Activated CD4-positive, alpha-beta memory T cell treated with anti-CD3 and anti-CD28 coated beads for 36 hours (primary cell): ENCODE measurements at regions of chr6 and their contacts with region 1.

Region 1: DNA sequence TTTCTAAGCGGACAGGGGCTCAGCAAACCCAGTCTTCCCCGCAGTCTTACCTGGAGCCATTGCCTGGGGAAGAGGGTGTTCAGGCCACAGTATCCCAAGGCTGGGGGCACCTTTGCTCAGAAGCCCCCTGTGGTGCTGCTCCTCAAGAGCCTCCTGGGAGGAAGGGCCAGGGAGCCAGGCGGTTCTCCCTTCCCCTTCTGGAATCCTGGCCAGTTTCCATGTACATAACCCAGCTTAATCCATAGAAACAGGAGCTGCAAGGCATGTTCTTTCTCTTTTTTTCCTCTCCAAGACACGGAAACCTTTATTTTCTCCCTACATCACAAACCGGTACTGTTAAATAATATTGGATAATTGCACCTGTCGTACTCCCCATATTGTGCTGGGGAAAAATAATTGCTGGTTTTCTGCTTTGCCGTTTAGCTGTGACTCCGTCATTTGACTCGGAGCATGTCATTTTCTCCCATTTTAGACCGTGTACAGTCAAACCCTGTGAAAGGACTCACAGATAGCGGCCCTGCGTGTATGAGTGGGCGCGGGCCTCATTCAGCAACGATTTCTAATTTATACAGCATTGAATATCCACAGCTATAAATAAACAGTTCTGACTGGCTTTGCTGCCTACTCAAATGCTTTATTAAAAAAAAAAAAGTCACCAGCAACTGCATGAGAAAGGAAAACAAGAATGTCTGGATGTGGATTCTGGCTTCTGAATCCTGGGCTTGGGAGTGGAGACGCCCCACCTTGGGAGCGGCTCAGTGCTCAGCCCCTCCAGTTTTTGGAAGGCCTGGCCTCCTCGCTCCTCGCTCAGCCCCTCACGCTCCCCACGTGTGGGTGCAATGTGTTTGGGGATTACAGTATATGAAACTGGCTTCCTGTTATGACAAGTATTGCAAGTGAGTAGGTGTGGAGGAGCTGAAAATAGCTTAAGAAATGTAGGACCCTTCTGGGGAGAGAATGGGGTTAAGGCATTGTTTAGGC is 67.3 kb downstream of the ADTRP start:
- DNase-seq: peak; percentile 83
- H3K4me3 Mint-ChIP-seq: peak overlapping the region; percentile 68
- H3K27ac Mint-ChIP-seq: peak overlapping the region; percentile 97
- H3K4me1 Mint-ChIP-seq: peaks cover 72% of the 10 kb centered on the region
- H3K27me3 Mint-ChIP-seq: no peaks in the 10 kb centered on the region

Region 2: DNA sequence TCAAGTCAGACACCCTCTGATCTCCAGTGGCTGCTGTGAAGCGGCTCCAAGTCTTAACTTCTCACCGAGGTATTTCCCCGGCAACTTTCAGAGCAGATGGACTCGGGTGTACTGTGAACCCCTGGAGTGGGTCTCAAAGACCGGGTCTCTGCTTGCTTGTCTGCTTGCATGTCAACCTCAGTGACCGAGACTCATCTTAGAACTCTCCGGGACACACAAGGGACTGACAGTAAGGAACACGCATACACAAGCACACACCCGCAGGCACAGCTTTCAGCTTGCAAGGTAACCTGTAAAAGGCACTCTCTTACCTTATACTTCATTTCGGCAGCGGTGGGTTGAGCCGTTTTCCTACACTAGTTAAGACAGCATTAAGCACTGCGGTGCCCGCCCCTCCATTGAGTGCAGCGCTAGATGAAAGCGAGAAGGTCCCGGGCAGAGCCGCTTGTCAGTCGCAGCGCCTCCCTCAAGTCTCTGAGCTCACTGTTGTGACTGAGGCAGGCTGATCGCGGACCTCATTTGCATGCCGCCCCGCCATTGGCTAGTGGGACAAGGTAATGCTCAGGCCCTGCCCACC is 479.0 kb before region 1 on chr6 and contains the start of gene NEDD9:
- CTCF ChIA-PET with region 1: no interaction called
- POLR2A ChIA-PET with region 1: no interaction called
- intact Hi-C with region 1: loop called (anchors 10 kb)
- DNase-seq: peak; percentile 98
- H3K4me3 Mint-ChIP-seq: peak within 1 kb of the TSS; percentile 81
- H3K27ac Mint-ChIP-seq: peak within 1 kb of the TSS; percentile 96
- H3K4me1 Mint-ChIP-seq: peaks cover 65% of the 10 kb centered on the region
- H3K27me3 Mint-ChIP-seq: no peaks in the 10 kb centered on the region
- total RNA-seq, gene NEDD9: 26.6 to 31.5 TPM

Region 3: DNA sequence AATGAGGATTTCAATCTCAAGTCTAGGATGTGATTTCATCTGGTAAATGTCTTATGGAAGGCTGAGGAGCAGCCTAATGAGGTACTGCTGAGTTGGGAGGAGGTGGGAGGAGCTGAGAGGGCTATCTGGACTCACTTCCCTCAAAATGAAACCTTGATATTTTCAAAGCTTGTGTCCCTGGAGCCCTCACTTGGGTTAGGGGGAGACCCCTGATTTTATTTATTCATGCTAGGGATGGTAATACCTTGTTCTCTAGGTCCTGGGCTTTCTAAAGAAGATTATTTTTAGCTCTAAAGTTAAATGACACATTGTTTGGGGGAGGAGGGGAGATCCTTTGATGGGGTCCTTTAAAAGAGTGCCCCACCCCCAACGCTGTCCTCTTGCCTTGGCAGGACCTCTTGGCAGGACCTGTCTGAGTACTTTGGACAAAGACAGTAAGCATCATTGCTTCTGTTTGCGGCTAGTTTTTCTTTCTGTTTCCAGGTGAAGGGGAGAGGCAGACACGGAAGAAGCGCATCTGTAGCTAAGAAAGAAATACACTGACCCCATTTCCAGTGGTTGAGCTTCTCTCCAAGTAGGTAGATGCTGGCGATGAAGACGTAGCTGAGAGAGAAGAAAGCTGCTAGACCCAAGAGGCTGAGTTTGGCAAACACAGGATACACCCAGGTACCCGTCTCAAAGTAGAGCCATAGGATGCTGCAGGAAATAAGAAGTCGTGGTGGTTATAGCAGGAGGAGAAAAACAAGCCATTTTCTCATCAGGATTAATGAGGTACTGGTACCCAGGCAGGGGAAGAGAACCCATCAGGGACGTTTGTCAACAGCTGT is 11.7 kb after region 1 on chr6:
- CTCF ChIA-PET with region 1: interaction called, 16 read pairs
- POLR2A ChIA-PET with region 1: interaction called, 75 read pairs
- intact Hi-C with region 1: loop called (anchors 1 kb)
- DNase-seq: no peak
- H3K4me3 Mint-ChIP-seq: peak overlapping the region; percentile 69
- H3K27ac Mint-ChIP-seq: peak overlapping the region; percentile 87
- H3K4me1 Mint-ChIP-seq: peaks cover 56% of the 10 kb centered on the region
- H3K27me3 Mint-ChIP-seq: no peaks in the 10 kb centered on the region

Region 4: DNA sequence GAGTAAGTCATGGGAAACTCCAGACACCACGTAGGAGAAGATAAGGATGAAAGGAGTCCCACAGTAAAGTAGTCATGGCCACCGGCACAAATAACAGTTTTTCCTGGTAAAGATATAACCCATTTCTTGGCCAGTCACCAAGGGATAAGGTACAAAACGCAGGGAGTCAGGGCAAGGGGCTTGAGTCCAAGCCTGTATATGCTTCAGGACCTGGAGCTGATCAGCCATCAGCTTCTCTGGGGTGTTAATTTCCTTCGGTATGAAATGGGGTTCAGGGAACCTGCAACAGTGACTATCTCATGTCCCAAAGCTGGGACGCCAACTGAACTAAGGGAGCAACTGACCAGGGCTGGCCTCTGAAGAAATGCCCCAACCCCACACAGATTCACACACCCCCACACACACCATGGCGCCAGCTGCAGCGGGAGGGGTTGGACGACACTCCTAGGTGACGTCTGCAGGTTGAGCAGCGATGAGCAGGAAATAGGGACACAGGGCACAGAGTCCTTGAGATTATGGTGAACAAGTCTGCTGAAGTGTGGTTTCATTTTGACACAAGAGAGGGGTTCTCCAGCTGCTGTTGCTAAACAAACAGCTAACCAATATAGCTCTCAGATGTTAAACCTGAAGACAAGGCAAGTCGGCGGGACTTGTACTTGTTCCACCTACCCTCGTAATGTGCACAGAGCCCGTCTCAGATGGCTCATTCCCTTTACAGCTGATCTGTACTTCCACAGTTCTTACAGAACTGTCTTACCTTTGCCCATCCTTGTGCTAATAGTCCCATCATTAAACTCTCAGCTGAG is 74.7 kb after region 1 on chr6:
- CTCF ChIA-PET with region 1: no interaction called
- POLR2A ChIA-PET with region 1: interaction called, 12 read pairs
- intact Hi-C with region 1: loop called (anchors 1 kb)
- DNase-seq: peak; percentile 80
- H3K4me3 Mint-ChIP-seq: peak overlapping the region; percentile 70
- H3K27ac Mint-ChIP-seq: peak overlapping the region; percentile 75
- H3K4me1 Mint-ChIP-seq: peaks cover 10% of the 10 kb centered on the region
- H3K27me3 Mint-ChIP-seq: peaks cover 10% of the 10 kb centered on the region

Region 5: GRCh38 chr6:11900662-11901598 is 189.6 kb after region 1 on chr6:
- CTCF ChIA-PET with region 1: no interaction called
- POLR2A ChIA-PET with region 1: no interaction called
- intact Hi-C with region 1: loop called (anchors 5 kb)
- DNase-seq: no peak
- H3K4me3 Mint-ChIP-seq: peak overlapping the region; percentile 38
- H3K27ac Mint-ChIP-seq: no peak overlapping the region
- H3K4me1 Mint-ChIP-seq: peaks cover 19% of the 10 kb centered on the region
- H3K27me3 Mint-ChIP-seq: peaks cover 3% of the 10 kb centered on the region

Region 6: GRCh38 chr6:12119085-12119588 is 407.8 kb after region 1 on chr6:
- CTCF ChIA-PET with region 1: no interaction called
- POLR2A ChIA-PET with region 1: no interaction called
- intact Hi-C with region 1: loop called (anchors 1 kb)
- DNase-seq: peak; percentile 66
- H3K4me3 Mint-ChIP-seq: no peak overlapping the region
- H3K27ac Mint-ChIP-seq: peak overlapping the region; percentile 85
- H3K4me1 Mint-ChIP-seq: peaks cover 49% of the 10 kb centered on the region
- H3K27me3 Mint-ChIP-seq: no peaks in the 10 kb centered on the region